ENCODE measurements at regions of chr1 and their contacts with region 1.

Region 1: DNA sequence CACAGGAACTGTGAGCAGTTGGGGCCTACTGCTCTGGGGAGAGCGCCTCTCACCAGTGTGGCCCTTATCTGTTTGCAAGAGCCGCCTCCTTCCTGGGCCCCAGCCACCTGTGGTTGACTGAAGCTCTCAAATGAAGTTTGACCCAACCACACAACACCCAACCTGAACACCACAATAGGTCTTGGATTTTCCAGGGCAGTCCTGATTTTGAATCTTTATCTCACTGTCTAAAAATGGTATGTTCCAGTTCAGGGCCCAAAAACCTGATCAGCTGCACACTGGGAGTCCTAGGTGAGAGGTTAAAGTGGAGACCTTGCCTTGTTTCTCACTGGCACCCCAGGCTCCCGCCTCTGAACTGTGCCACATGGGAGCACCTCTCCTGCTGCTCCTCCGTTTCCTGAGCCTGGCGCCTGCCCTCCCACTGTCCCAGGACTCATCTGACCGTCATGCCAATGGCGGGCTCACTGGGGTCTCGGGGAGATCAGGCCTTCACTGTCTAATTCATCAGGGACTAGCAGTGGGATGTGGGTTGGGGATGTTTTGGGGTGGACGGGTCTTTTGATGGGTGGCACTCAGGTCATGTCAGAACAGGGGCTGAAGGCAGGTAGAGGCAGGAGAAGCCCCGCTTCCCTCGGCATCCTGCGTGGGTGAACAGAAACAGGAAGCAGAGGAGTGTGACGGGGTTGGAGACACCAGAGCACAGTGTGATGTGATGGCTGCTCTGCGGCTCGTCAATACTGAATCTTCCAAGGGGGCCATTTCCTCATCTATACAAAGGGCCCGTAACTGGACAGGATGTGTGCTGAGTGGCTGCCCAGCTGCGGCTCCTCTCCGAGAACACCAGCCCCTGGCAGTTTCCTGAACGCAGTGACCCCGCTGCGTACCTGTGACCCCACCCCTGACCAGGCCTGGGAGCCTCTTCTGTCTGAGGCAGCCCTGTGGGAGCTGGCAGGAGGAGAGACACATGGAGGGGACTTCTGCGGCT is 59.6 kb upstream of the ITPKB start:
- DNase-seq: peak; percentile 80
- ATAC-seq: peak; percentile 83
- H3K4me3 Mint-ChIP-seq: peak overlapping the region; percentile 44
- H3K27ac Mint-ChIP-seq: peak overlapping the region; percentile 92
- H3K4me1 Mint-ChIP-seq: peaks cover 38% of the 10 kb centered on the region
- H3K27me3 Mint-ChIP-seq: no peaks in the 10 kb centered on the region

Region 2: DNA sequence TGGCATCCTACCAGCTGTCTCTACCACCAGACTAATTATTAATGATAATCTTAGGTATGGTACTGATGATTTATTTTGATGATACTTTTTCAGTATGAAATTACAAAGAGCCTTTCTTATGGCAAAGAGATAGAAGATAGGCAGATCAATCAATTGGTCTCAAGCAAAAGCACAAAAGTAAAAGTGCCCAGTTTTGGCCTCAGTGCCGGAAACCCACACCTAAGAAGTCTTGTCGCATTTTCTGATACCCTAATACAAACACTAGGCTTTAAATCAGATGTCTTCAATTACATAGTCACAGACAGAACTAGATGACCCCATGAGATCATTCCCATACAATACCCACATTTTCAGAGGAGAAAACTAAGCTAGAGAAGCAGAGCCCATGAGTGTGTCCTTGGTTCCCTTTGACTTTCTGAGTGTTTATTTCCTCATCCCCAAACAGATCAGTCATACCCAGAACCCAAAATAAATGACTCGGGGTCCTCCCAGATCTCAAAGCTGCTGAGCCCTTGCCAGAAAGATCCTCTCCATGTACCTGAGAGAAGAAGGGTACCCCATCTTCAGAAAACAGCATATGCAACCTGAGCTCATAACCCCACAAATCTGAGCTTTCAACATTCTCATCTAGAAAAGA is 67.3 kb before region 1 on chr1:
- CTCF ChIA-PET with region 1: no interaction called
- POLR2A ChIA-PET with region 1: no interaction called
- intact Hi-C with region 1: no loop called
- DNase-seq: no peak
- ATAC-seq: peak; percentile 17
- H3K4me3 Mint-ChIP-seq: peak overlapping the region; percentile 88
- H3K27ac Mint-ChIP-seq: peak overlapping the region; percentile 97
- H3K4me1 Mint-ChIP-seq: peaks cover 81% of the 10 kb centered on the region
- H3K27me3 Mint-ChIP-seq: no peaks in the 10 kb centered on the region

Region 3: DNA sequence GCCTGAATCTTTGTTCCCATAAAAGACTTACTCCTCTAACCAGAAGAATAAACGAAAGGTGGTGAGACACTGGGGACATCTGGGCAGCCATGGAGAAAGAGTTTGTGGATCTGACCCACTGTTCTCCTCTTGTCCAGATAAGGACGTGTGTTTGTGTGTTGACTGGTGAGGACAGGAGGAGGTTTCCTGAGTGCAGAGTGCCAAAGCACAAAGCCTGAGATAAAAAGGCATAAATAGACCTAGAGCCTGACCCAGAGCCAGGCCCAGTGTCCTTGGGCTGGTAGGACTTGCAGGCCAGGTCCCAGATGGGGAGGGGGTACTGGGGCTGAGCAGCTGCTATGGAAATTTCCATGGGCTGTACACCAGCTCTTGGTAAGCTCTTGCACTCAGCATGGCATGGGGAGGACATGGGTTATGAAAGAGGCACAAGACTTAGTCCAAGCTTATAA is 121.8 kb after region 1 on chr1:
- CTCF ChIA-PET with region 1: no interaction called
- POLR2A ChIA-PET with region 1: interaction called, 11 read pairs
- intact Hi-C with region 1: no loop called
- DNase-seq: no peak
- ATAC-seq: no peak
- H3K4me3 Mint-ChIP-seq: no peak overlapping the region
- H3K27ac Mint-ChIP-seq: no peak overlapping the region
- H3K4me1 Mint-ChIP-seq: no peaks in the 10 kb centered on the region
- H3K27me3 Mint-ChIP-seq: peaks cover 1% of the 10 kb centered on the region

Measured in activated CD4-positive, alpha-beta T cell treated with anti-CD3 and anti-CD28 coated beads for 36 hours (primary cell).